Keratinocyte (primary cell): ENCODE measurements at regions of chr9 and their contacts with region 1.

Region 1: DNA sequence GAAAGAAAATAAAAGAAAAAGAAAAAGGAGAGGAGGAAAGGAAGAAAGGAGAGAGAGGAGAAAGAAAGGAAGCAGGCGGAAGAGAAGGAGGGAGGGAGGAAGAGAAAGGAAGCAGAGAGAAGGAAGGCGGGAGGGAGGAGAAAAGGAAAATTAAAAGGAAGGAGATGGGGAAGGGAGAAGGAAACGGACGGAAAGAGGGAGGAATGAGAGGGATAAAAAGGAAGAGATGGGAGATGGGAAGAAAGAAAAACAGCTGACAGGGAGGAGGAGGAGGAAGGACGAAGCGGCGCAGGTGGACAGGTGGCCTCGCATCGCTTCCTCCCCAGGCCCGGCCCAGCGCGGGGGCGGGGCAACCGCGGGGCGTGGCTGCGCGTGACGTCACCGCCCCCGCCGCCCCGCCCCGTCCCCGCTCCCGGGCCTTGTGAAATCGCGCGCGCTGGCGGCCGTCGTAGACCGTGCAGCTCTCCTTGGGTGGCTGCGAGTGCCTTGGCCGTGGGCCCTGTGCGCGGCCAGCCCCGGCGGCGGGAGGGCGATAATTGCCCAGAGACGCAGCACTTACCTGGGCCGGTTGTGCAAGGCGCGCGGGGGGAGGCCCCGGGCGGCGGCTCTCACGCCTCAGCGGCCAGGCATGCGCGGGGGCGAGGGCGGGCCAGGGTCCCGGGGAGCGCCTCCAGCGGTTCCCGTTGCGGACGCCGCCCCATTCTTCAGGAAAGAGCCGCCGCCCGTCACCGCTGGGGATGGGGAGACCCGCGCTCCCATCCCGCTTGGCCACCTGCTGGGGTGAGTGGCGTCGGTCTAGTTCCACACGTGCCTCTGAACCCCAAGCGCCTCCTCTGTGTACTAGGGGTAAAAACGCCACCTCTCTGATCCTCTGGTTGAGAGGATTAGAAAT is 49.6 kb upstream of the FOXE1 start:
- DNase-seq: no peak
- H3K4me3 ChIP-seq: peak overlapping the region; percentile 35 to 70 (median 48)
- H3K27ac ChIP-seq: peak overlapping the region; percentile 24
- H3K4me1 ChIP-seq: peaks cover 36% of the 10 kb centered on the region
- H3K27me3 ChIP-seq: no peaks in the 10 kb centered on the region
- CTCF ChIP-seq: peak in 2 of 3 experiments; percentile 20 to 21

Region 2: DNA sequence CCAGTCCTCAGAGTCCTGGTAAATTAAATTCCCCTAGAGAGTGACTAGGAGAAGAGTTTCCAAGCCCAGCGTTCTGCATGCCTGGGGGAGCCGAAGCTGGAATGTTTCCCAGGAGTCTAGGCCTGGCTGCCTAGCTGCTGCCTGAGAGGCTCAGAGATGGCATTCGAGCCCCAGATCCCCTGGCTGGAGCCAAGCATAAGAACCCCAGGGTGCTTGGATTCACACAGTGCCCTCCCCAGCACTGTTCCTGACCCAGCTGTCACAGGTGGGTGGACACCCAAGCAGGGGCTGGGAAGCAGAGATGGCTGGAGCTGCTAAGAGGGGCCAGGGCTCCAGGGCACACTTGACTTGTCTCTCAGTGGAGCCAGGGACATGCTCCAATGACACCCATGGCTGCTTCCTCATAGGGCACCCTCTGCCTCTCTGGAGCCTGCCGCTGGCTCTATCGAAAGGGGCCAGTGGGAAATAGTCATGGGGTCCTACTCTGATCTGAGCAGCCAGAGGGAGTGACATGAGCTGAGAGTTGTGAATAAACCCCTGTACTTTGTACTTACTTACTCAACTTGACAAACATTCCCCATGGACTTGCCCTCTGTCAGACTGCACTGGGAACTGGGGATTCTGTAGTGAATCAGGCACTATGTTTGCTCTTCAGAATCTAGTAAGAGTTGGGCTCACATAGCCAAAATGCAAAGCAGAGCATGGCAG is 43.7 kb before region 1 on chr9:
- dilution Hi-C with region 1: loop called (anchors 10 kb)
- DNase-seq: no peak
- H3K4me3 ChIP-seq: no peak overlapping the region
- H3K27ac ChIP-seq: no peak overlapping the region
- H3K4me1 ChIP-seq: no peaks in the 10 kb centered on the region
- H3K27me3 ChIP-seq: peaks cover 5% of the 10 kb centered on the region
- CTCF ChIP-seq: no peak